H1 (cell line): ENCODE measurements at regions of chr5 and their contacts with region 1.

Region 1: DNA sequence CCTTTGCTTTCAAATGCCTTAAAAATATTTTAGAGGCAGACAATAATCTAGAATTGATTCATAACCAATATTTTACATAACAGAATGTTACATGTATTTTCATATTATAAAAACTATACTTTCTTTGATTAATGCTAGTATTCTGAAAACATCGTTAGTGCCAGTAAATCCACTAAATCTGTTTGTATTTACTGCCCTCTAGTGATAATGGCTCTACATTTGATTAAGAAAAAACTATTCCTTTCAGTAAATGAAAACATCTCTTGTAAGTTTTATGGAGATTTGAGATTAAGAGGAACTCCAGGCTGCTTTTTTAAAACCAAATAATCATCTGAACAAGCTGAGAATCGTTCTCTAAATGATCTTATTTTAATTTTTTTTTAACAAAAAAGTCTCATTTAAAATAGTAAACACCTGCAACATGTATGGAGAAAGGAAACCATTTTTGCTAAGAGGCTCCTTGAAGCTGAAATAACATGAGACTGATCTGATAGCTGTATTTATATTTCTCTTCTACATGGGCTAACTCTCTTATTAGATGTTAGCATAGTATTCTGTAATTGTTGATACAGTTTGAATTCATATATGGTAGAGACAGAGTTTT is 424.7 kb downstream of the RAB3C start:
- DNase-seq: no peak
- H3K4me3 ChIP-seq: no peak overlapping the region
- H3K27ac ChIP-seq: no peak overlapping the region
- H3K4me1 ChIP-seq: peaks cover 2 to 10% (median 8%) of the 10 kb centered on the region in 4 experiments; a peak in 4 of 7 replicates
- H3K27me3 ChIP-seq: no peaks in the 10 kb centered on the region
- CTCF ChIP-seq: peak in 2 of 3 experiments; percentile 30 to 38; a peak in 2 of 4 replicates
- EP300 ChIP-seq: no peak
- POLR2A ChIP-seq: no peak
- RAD21 ChIP-seq: peak in 1 of 2 experiments; percentile 71

Region 2: GRCh38 chr5:58871648-58872242 is 135.8 kb before region 1 on chr5:
- CTCF ChIA-PET with region 1: interaction called, 24 read pairs
- POLR2A ChIA-PET with region 1: no interaction called
- DNase-seq: no peak
- H3K4me3 ChIP-seq: no peak overlapping the region
- H3K27ac ChIP-seq: no peak overlapping the region
- H3K4me1 ChIP-seq: no peaks in the 10 kb centered on the region
- H3K27me3 ChIP-seq: no peaks in the 10 kb centered on the region
- CTCF ChIP-seq: peak in 2 of 3 experiments; percentile 33 to 38; a peak in 2 of 4 replicates
- EP300 ChIP-seq: no peak
- POLR2A ChIP-seq: no peak
- RAD21 ChIP-seq: peak; percentile 37 to 40

Region 3: GRCh38 chr5:59042201-59043055 is 34.9 kb after region 1 on chr5:
- CTCF ChIA-PET with region 1: no interaction called
- POLR2A ChIA-PET with region 1: no interaction called
- DNase-seq: no peak
- H3K4me3 ChIP-seq: no peak overlapping the region
- H3K27ac ChIP-seq: no peak overlapping the region
- H3K4me1 ChIP-seq: peaks cover 0 to 2% (median 0%) of the 10 kb centered on the region in 4 experiments; a peak in 2 of 7 replicates
- H3K27me3 ChIP-seq: peaks cover 0 to 28% (median 26%) of the 10 kb centered on the region in 4 experiments; a peak in 6 of 7 replicates
- CTCF ChIP-seq: no peak
- EP300 ChIP-seq: no peak
- POLR2A ChIP-seq: no peak
- RAD21 ChIP-seq: no peak